PC-9 (cell line): ENCODE measurements at regions of chr1 and their contacts with region 1.

Region 1: DNA sequence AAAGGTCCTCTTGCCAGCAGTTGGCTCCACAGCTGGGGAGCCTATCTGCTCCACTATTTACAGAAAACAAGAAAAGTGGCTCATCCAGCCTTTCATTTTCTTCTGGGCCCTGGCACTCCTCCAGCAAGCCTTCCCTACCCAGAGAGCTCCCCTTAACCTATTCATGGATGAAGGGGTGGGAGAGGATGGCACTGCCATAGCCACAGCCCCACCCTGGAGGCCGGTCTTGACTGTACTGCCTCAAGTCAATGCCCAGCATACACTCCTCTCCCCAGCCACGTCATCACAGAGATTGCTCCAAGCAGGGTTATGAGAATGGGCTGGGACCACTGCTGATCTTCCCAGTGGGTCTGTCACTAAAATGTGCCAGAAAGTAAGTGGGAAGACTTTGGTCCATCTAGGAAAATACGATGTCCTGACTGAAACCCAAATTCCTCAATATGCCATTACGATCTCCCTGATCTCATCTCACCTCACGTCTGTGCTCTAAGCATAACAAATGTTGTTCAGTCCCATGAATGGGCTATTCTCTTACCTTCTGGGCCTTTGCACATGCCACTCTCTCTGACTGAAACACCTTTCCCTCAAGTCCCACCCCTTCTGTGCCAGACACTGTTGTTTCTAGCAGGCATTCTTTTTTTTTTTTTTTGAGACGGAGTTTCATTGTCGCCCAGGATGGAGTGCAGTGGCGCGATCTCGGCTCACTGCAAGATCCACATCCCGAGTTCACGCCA is 21.4 kb upstream of the PTAFR start:
- DNase-seq: no peak
- H3K4me3 ChIP-seq: no peak overlapping the region
- H3K27ac ChIP-seq: no peak overlapping the region
- H3K4me1 ChIP-seq: peaks cover 14% of the 10 kb centered on the region; the same call in 1 of the 2 replicates
- H3K27me3 ChIP-seq: no peaks in the 10 kb centered on the region
- CTCF ChIP-seq: no peak

Region 2: GRCh38 chr1:28129150-28129549 is 68.7 kb before region 1 on chr1:
- CTCF ChIA-PET with region 1: no interaction called
- POLR2A ChIA-PET with region 1: interaction called, 6 read pairs
- intact Hi-C with region 1: loop called (anchors 1 kb)
- DNase-seq: peak; percentile 71 to 92
- H3K4me3 ChIP-seq: no peak overlapping the region
- H3K27ac ChIP-seq: peak overlapping the region; percentile 87
- H3K4me1 ChIP-seq: peaks cover 18% of the 10 kb centered on the region
- H3K27me3 ChIP-seq: no peaks in the 10 kb centered on the region
- CTCF ChIP-seq: no peak